ENCODE measurements at regions of chr7 and their contacts with region 1.

Region 1: DNA sequence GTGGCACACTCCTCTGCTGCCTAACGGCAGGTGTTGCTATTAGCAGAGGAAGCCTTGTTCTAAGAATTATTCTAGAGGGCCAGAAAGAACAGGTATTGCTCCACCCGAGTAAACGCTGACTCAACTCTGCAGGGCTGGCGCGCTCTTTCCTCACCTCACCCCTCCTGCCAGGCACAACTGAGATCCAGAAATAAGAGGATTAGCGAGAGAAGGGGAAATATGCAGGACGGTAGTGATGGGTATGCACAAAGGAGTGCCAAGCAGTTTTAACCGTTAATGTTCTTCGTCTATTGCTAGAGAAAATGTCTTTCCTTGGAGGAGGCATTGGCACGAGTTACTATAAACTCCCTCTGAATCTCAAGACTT is 369 bp upstream of the SCIN start:
- DNase-seq: no peak
- CTCF ChIP-seq: no peak

Region 2: DNA sequence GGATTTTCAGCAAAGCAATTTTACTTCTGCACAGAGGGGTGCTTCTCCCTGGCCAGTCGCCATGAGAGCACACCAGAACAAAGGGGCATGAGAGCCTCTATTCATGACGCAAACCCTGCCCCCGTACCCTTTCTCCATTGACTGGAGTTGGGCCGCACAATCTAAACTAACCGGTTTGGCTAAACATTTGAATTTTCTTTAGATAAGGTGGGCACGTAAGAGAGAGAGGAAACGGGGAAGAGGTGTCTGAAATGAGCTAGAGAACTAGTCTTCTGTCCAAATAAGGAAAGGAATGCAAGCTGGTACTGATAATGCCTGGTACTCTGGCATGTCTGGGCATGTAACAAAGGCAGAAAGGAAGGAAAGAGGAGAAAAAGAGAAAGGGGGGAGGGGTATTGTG is 12.9 kb before region 1 on chr7:
- CTCF ChIA-PET with region 1: interaction called, 15 read pairs
- POLR2A ChIA-PET with region 1: no interaction called
- DNase-seq: no peak
- CTCF ChIP-seq: no peak

Region 3: DNA sequence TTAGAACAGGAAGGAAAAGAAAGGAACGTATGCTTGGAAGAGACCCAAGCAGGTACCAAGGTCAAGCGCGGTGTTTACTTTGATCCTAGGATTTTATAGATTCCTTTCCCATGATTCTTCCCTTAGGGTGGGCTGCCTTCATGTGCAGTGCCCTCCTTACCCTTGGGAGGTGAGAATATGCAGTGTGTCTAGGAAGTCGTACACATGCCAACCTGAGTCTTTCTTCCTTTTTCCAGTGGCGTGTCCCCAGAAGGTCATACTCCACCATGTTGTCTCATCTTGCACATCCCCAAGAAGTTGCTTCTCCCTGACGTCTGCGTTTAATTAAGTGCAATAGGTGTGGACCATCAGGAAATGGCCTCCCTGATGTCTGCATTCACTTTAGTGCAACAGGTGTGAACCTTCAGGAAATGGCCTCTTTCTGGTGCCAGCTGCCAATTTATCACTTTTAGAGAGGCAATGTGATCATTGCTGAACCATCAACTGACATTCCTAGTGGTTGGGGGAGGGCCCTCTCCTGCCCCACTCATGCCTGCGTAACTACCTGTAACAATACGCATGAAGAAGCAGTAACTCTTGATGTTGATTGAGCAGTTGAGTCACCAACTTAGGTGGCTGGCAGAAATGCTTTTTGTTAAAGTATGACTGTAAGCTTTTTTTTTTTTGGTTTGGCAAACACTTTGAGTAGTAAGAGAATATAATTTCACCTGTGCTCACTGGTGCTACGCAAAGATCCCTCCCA is 26.1 kb after region 1 on chr7:
- CTCF ChIA-PET with region 1: no interaction called
- POLR2A ChIA-PET with region 1: no interaction called
- DNase-seq: no peak
- CTCF ChIP-seq: no peak

Region 4: DNA sequence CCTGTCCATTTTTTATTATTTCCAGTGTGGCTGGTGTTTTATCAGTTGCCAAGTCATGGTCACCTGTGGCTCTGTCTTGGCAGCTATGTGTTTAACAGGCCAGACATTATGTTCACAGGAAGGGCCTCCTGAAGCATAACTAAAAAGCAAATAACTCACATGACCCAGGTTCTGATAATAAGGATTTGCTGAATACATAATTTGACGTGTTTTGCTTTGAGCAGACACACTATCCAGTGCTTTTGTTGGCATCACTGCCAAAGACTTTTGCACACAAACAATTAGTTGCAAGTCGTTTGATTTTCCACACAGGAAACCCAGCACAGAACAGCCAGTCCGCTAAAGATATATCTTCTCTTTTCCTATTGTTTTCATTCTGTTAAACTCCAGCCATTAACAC is 290.9 kb after region 1 on chr7:
- CTCF ChIA-PET with region 1: no interaction called
- POLR2A ChIA-PET with region 1: no interaction called
- DNase-seq: no peak
- CTCF ChIP-seq: no peak

Measured in GM10248 (cell line).